PC-3 (cell line): ENCODE measurements at regions of chr3 and their contacts with region 1.

Region 1: DNA sequence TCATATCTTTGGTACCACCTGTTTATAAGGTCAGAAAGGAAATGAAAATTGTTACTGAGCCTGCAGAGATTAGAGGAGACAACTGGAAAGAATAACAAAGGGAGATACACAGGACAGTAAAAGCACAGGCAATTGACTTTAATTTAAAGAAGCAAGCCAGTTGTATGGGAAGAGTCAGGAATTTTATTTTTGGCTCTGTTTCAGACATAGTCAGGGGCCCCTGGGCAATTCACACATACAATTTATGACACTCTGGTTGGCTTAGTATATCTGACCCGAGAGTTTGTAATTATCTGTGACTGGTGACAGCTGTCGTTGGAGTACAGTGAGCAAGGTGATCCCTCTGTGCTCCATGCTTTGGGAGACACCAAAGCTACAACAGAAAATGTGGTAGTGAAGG is 591.9 kb upstream of the NECTIN3 start:
- DNase-seq: no peak
- ATAC-seq: no peak
- H3K4me3 ChIP-seq: no peak overlapping the region
- H3K27ac ChIP-seq: no peak overlapping the region
- H3K4me1 ChIP-seq: peaks cover 28% of the 10 kb centered on the region
- H3K27me3 ChIP-seq: no peaks in the 10 kb centered on the region
- CTCF ChIP-seq: no peak

Region 2: DNA sequence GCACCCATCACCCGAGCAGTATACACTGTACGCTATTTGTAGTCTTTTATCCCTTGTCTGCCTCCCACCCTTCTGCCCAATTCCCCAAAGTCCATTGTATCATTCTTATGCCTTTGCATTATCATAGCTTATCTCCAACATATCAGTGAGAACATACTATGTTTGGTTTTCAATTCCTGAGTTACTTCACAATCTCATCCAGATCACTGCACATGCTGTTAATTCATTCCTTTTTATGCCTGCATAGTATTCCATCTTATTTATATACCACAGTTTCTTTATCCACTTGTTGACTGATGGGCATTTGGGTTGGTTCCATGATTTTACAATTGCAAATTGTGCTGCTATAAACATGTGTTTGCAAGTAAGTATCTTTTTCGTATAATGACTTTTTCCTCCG is 27.2 kb after region 1 on chr3:
- CTCF ChIA-PET with region 1: no interaction called
- POLR2A ChIA-PET with region 1: no interaction called
- intact Hi-C with region 1: loop called (anchors 1 kb)
- DNase-seq: no peak
- ATAC-seq: no peak
- H3K4me3 ChIP-seq: no peak overlapping the region
- H3K27ac ChIP-seq: no peak overlapping the region
- H3K4me1 ChIP-seq: no peaks in the 10 kb centered on the region
- H3K27me3 ChIP-seq: no peaks in the 10 kb centered on the region
- CTCF ChIP-seq: no peak

Region 3: GRCh38 chr3:110521019-110521418 is 41.3 kb after region 1 on chr3:
- CTCF ChIA-PET with region 1: no interaction called
- POLR2A ChIA-PET with region 1: no interaction called
- intact Hi-C with region 1: loop called (anchors 2 kb)
- DNase-seq: peak; percentile 94
- ATAC-seq: peak; percentile 99
- H3K4me3 ChIP-seq: no peak overlapping the region
- H3K27ac ChIP-seq: peak overlapping the region; percentile 27
- H3K4me1 ChIP-seq: peaks cover 16% of the 10 kb centered on the region
- H3K27me3 ChIP-seq: no peaks in the 10 kb centered on the region
- CTCF ChIP-seq: no peak